ENCODE measurements at regions of chr1 and their contacts with region 1.

Region 1: GRCh38 chr1:45490626-45491486 is at the start of gene TESK2:
- DNase-seq: peak; percentile 87 to 99 (median 96)
- ATAC-seq: peak; percentile 90 to 94 (median 94)
- H3K4me3 ChIP-seq: peak within 1 kb of the TSS; percentile 66 to 68
- H3K4me3 Mint-ChIP-seq: no peak within 1 kb of the TSS
- H3K27ac ChIP-seq: peak within 1 kb of the TSS; percentile 67
- H3K27ac Mint-ChIP-seq: no peak within 1 kb of the TSS
- H3K4me1 ChIP-seq: peaks cover 2 to 19% of the 10 kb centered on the region in 2 experiments
- H3K4me1 Mint-ChIP-seq: peaks cover 6 to 13% (median 9%) of the 10 kb centered on the region in 3 donors
- H3K27me3 ChIP-seq: no peaks in the 10 kb centered on the region
- H3K27me3 Mint-ChIP-seq: no peaks in the 10 kb centered on the region
- total RNA-seq, gene TESK2: 4.3 to 7.9 (median 5.5) TPM

Region 2: GRCh38 chr1:45011837-45012638 is 478.8 kb before region 1 on chr1 and contains the start of gene UROD:
- CTCF ChIA-PET with region 1: interaction called, 5 to 40 read pairs
- POLR2A ChIA-PET with region 1: interaction called in 1 of 2 experiments, 5 read pairs
- DNase-seq: peak; percentile 69 to 95 (median 89)
- ATAC-seq: peak; percentile 79 to 86 (median 80)
- H3K4me3 ChIP-seq: peak within 1 kb of the TSS; percentile 71 to 90
- H3K4me3 Mint-ChIP-seq: peak within 1 kb of the TSS; percentile 82 to 94 (median 90)
- H3K27ac ChIP-seq: peak within 1 kb of the TSS; percentile 81
- H3K27ac Mint-ChIP-seq: peak within 1 kb of the TSS; percentile 88 to 91
- H3K4me1 ChIP-seq: peaks cover 21 to 54% of the 10 kb centered on the region in 2 experiments
- H3K4me1 Mint-ChIP-seq: peaks cover 51 to 59% (median 55%) of the 10 kb centered on the region in 3 donors
- H3K27me3 ChIP-seq: no peaks in the 10 kb centered on the region
- H3K27me3 Mint-ChIP-seq: no peaks in the 10 kb centered on the region
- total RNA-seq, gene UROD: 52.0 to 58.6 (median 57.3) TPM

Region 3: DNA sequence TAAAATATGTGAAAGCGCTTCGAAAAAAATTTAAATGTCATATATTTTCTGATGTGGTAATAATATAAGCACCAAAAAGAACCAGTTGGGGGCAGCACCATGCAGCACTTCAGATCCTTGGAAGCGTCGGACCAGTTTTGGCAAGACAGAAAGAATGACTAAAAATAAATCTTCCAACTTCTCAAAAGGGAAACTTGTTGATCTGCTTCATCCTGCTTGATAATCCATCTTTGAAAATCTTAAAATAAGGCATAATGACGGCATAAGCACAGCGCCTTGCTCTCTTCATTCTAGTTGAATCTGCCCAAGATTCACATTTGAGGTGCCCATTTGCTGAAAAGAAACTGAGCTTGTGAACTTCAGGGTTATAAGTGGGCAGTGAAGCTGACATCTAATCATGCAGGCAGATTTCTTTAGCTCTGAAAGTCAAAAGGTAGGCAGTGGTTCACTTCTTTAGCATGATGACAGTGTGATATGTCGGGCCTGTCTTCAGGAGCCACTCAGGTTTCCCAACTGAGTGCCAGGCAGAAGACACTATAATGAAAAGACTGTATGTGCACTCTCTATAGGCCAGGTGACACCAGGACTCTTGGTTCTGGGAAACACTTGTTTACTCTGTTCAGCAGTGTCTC is 130.9 kb before region 1 on chr1:
- CTCF ChIA-PET with region 1: interaction called, 26 to 85 read pairs
- POLR2A ChIA-PET with region 1: interaction called in 1 of 2 experiments, 3 read pairs
- DNase-seq: peak in 27 of 35 experiments; percentile 18 to 70 (median 41)
- ATAC-seq: peak in 3 of 4 experiments; percentile 45 to 76 (median 55)
- H3K4me3 ChIP-seq: no peak overlapping the region
- H3K4me3 Mint-ChIP-seq: no peak overlapping the region
- H3K27ac ChIP-seq: no peak overlapping the region
- H3K27ac Mint-ChIP-seq: peak overlapping the region in 1 of 2 donors; percentile 13
- H3K4me1 ChIP-seq: no peaks in the 10 kb centered on the region
- H3K4me1 Mint-ChIP-seq: peaks cover 5 to 6% (median 6%) of the 10 kb centered on the region in 3 donors
- H3K27me3 ChIP-seq: no peaks in the 10 kb centered on the region
- H3K27me3 Mint-ChIP-seq: no peaks in the 10 kb centered on the region

Region 4: GRCh38 chr1:45430490-45430889 is 60.4 kb before region 1 on chr1:
- CTCF ChIA-PET with region 1: no interaction called
- POLR2A ChIA-PET with region 1: interaction called in 1 of 2 experiments, 18 read pairs
- DNase-seq: no peak
- ATAC-seq: no peak
- H3K4me3 ChIP-seq: no peak overlapping the region
- H3K4me3 Mint-ChIP-seq: no peak overlapping the region
- H3K27ac ChIP-seq: no peak overlapping the region
- H3K27ac Mint-ChIP-seq: no peak overlapping the region
- H3K4me1 ChIP-seq: no peaks in the 10 kb centered on the region
- H3K4me1 Mint-ChIP-seq: peaks cover 0 to 2% (median 0%) of the 10 kb centered on the region in 3 donors
- H3K27me3 ChIP-seq: no peaks in the 10 kb centered on the region
- H3K27me3 Mint-ChIP-seq: no peaks in the 10 kb centered on the region

Region 5: GRCh38 chr1:45694823-45695222 is 204.0 kb after region 1 on chr1:
- CTCF ChIA-PET with region 1: no interaction called
- POLR2A ChIA-PET with region 1: no interaction called
- DNase-seq: no peak
- ATAC-seq: no peak
- H3K4me3 ChIP-seq: no peak overlapping the region
- H3K4me3 Mint-ChIP-seq: no peak overlapping the region
- H3K27ac ChIP-seq: no peak overlapping the region
- H3K27ac Mint-ChIP-seq: no peak overlapping the region
- H3K4me1 ChIP-seq: peaks cover 0 to 3% of the 10 kb centered on the region in 2 experiments
- H3K4me1 Mint-ChIP-seq: peaks cover under 1 to 17% (median 16%) of the 10 kb centered on the region in 3 donors
- H3K27me3 ChIP-seq: no peaks in the 10 kb centered on the region
- H3K27me3 Mint-ChIP-seq: no peaks in the 10 kb centered on the region

Region 6: GRCh38 chr1:46335081-46335480 is 844.2 kb after region 1 on chr1:
- CTCF ChIA-PET with region 1: interaction called in 1 of 2 experiments, 11 read pairs
- POLR2A ChIA-PET with region 1: no interaction called
- DNase-seq: no peak
- ATAC-seq: no peak
- H3K4me3 ChIP-seq: no peak overlapping the region
- H3K4me3 Mint-ChIP-seq: no peak overlapping the region
- H3K27ac ChIP-seq: no peak overlapping the region
- H3K27ac Mint-ChIP-seq: no peak overlapping the region
- H3K4me1 ChIP-seq: peaks cover 2 to 7% of the 10 kb centered on the region in 2 experiments
- H3K4me1 Mint-ChIP-seq: peaks cover 6 to 7% (median 6%) of the 10 kb centered on the region in 3 donors
- H3K27me3 ChIP-seq: peaks cover 0 to 4% of the 10 kb centered on the region in 2 experiments
- H3K27me3 Mint-ChIP-seq: no peaks in the 10 kb centered on the region

Measured in T-cell (primary cell).